Cardiac septum (tissue), 1 donor: ENCODE measurements at regions of chr1 and their contacts with region 1.

Region 1: GRCh38 chr1:41109316-41110197 is 88.0 kb upstream of the SLFNL1 start:
- DNase-seq: no peak

Region 2: GRCh38 chr1:41158147-41158875 is 48.8 kb after region 1 on chr1:
- intact Hi-C with region 1: loop called (anchors 5 kb)
- DNase-seq: no peak